AG04450 (cell line): ENCODE measurements at regions of chr13 and their contacts with region 1.

Region 1: GRCh38 chr13:46126552-46127357 is 21.9 kb upstream of the CPB2 start:
- DNase-seq: peak; percentile 43
- H3K4me3 ChIP-seq: no peak overlapping the region
- H3K27ac ChIP-seq: no peak overlapping the region
- H3K27me3 ChIP-seq: peaks cover 11% of the 10 kb centered on the region
- CTCF ChIP-seq: peak; percentile 95

Region 2: GRCh38 chr13:45623515-45624090 is 503.2 kb before region 1 on chr13:
- CTCF ChIA-PET with region 1: interaction called, 29 read pairs
- POLR2A ChIA-PET with region 1: no interaction called
- DNase-seq: no peak
- H3K4me3 ChIP-seq: no peak overlapping the region
- H3K27ac ChIP-seq: no peak overlapping the region
- H3K27me3 ChIP-seq: peaks cover 8% of the 10 kb centered on the region
- CTCF ChIP-seq: peak; percentile 59

Region 3: DNA sequence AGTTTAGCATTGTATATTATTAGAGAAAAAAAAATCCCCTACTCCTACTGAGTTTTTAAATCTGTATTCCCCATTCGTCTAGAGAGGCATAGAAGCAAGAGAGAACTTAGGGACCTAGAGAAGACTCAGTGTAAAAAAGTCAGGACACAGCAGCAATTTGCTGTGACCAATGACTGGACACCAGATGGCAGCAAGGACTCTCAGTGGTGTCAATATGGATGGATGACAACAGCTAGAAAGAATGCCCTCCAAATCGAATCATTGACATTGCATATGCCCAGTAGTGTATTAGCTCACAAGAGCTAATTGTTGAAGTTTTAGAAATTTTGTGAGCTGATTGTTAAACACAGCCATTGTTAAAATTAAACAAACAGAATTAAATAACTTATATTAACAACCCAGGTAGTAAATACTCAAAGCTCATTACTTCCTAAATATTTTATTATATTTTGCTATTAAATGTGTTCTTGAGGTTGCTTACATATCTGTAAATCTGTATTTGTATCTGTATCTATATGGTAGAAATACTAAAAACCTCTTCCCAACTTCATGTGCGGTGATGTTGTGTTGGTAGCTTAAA is 319.1 kb before region 1 on chr13:
- CTCF ChIA-PET with region 1: interaction called, 24 read pairs
- POLR2A ChIA-PET with region 1: no interaction called
- DNase-seq: no peak
- H3K4me3 ChIP-seq: no peak overlapping the region
- H3K27ac ChIP-seq: no peak overlapping the region
- H3K27me3 ChIP-seq: peaks cover 2% of the 10 kb centered on the region
- CTCF ChIP-seq: peak; percentile 31

Region 4: GRCh38 chr13:45941261-45941660 is 185.5 kb before region 1 on chr13:
- CTCF ChIA-PET with region 1: interaction called, 10 read pairs
- POLR2A ChIA-PET with region 1: no interaction called
- DNase-seq: no peak
- H3K4me3 ChIP-seq: no peak overlapping the region
- H3K27ac ChIP-seq: no peak overlapping the region
- H3K27me3 ChIP-seq: peaks cover 16% of the 10 kb centered on the region
- CTCF ChIP-seq: no peak

Region 5: DNA sequence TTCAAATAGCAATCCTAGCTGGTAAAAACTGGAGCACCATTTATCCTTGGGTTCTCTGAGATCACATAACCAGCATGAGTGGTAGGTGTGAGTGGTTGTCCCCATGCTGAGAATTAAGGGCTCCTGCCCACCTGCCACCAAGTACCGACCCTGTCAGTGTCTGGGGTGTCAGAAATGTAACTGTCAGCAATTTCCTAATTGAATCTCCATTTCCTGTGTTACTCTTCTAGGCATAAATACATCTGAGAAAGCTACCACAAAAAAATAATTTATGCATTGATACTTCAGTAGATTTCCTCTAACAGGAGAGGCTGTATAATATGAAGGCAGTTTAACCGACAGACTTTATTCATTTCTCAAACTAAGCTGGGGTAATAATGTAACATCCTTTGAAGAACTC is 47.0 kb before region 1 on chr13:
- CTCF ChIA-PET with region 1: no interaction called
- POLR2A ChIA-PET with region 1: no interaction called
- DNase-seq: no peak
- H3K4me3 ChIP-seq: no peak overlapping the region
- H3K27ac ChIP-seq: no peak overlapping the region
- H3K27me3 ChIP-seq: no peaks in the 10 kb centered on the region
- CTCF ChIP-seq: no peak

Region 6: DNA sequence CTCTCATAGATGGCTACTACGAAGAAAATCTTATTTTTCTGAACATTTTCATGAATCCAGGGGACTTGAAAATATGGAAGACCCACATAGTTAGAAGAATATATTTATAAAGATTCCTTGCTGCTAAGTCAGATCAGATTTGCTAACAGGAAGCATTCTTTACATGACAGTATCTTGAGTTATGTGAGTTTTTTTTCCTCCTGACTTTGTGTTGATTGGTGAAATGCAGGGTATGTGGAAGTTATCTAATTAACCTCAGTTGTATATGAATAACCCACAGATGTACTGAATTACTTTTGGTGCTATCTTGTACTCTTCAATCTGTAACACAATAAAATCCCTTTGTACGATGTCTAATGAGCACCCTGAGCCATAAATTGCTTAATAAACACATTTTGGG is 616.4 kb after region 1 on chr13:
- CTCF ChIA-PET with region 1: no interaction called
- POLR2A ChIA-PET with region 1: no interaction called
- DNase-seq: no peak
- H3K4me3 ChIP-seq: no peak overlapping the region
- H3K27ac ChIP-seq: no peak overlapping the region
- H3K27me3 ChIP-seq: no peaks in the 10 kb centered on the region
- CTCF ChIP-seq: no peak